A673 (cell line): ENCODE measurements at regions of chr6 and their contacts with region 1.

Region 1: GRCh38 chr6:16238057-16238962 is at the start of gene GMPR:
- DNase-seq: peak; percentile 53
- H3K4me3 ChIP-seq: peak within 1 kb of the TSS; percentile 54
- H3K27ac ChIP-seq: no peak within 1 kb of the TSS
- H3K4me1 ChIP-seq: peaks cover 11% of the 10 kb centered on the region
- H3K27me3 ChIP-seq: no peaks in the 10 kb centered on the region
- CTCF ChIP-seq: no peak
- total RNA-seq, gene GMPR: 0.32 and 0.76 TPM in 2 replicates

Region 2: GRCh38 chr6:16200321-16200883 is 37.9 kb before region 1 on chr6:
- CTCF ChIA-PET with region 1: interaction called, 10 read pairs
- POLR2A ChIA-PET with region 1: no interaction called
- intact Hi-C with region 1: no loop called
- DNase-seq: no peak
- H3K4me3 ChIP-seq: no peak overlapping the region
- H3K27ac ChIP-seq: no peak overlapping the region
- H3K4me1 ChIP-seq: peaks cover 12% of the 10 kb centered on the region
- H3K27me3 ChIP-seq: no peaks in the 10 kb centered on the region
- CTCF ChIP-seq: no peak

Region 3: GRCh38 chr6:16206595-16207037 is 31.7 kb before region 1 on chr6:
- CTCF ChIA-PET with region 1: interaction called, 3 read pairs
- POLR2A ChIA-PET with region 1: interaction called, 10 read pairs
- intact Hi-C with region 1: no loop called
- DNase-seq: peak; percentile 87
- H3K4me3 ChIP-seq: no peak overlapping the region
- H3K27ac ChIP-seq: no peak overlapping the region
- H3K4me1 ChIP-seq: peaks cover 16% of the 10 kb centered on the region
- H3K27me3 ChIP-seq: no peaks in the 10 kb centered on the region
- CTCF ChIP-seq: peak; percentile 95

Region 4: GRCh38 chr6:16409531-16410441 is 171.5 kb after region 1 on chr6:
- CTCF ChIA-PET with region 1: no interaction called
- POLR2A ChIA-PET with region 1: no interaction called
- intact Hi-C with region 1: no loop called
- DNase-seq: peak; percentile 80
- H3K4me3 ChIP-seq: peak overlapping the region; percentile 13
- H3K27ac ChIP-seq: no peak overlapping the region
- H3K4me1 ChIP-seq: peaks cover 26% of the 10 kb centered on the region
- H3K27me3 ChIP-seq: no peaks in the 10 kb centered on the region
- CTCF ChIP-seq: peak; percentile 94